GM13976 (cell line): ENCODE measurements at regions of chr12 and their contacts with region 1.

Region 1: DNA sequence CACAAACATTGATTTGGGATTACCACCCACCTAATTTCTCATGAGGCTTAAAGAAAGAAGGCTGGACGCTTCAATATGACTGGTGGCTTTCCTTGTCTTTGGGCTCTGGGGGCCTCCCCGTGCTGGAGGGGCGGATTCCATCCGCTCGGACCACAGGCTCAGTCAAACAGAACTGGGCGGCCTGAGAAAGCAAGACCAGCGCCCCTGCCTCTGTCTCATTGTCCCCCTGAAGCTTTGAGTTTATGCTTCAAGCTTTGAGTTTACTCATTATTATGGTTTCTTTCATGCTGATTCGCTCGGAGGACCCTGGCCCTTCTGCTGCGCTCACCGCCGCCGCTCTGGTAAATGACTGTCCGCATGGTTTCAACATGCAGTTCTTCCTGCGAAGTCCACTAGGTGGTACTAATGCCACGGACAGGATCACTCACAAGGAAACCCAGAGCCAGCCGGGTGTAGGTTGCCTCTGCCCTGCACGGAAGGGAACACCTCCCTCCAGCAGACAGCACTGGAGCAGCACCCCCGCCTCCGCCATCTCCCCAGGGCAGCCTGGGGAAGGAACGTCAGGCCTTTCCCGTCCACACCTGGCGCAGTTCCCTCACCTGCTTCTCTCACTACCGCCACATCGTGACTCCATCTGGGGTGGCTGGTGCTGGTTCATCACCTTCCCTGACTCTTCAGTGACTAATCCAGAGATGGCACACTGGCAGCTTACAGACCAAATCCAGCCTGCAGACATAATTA is 13.2 kb upstream of the TIGAR start:
- DNase-seq: peak; percentile 65
- CTCF ChIP-seq: no peak

Region 2: DNA sequence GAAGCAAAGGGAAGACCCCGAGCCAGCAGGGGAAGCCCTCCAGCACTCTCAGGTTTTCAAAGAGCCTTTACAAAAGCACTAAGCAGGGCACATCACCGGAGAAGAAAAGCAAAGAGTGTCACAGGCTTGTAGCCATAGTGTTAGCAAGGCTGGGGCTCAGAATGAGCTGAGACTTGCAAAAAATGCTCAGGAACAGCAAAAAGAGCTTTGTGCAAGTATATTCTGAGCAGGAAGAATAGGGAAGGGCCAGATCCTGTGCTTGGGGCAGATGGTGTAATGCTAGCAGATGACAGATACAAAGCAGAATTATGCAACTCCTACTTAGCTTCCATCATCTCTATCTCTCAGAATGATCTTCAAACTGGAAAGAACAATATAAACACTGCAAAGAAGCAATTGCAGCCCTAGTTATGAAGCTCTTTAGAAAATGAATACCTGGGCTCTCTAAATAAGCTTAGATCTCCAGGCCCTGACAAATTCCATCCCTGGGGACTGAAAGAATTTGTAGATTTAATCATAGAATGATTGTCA is 410.9 kb before region 1 on chr12:
- in situ Hi-C with region 1: loop called (anchors 10 kb)
- DNase-seq: no peak
- CTCF ChIP-seq: no peak

Region 3: GRCh38 chr12:5220835-5221234 is 913.1 kb after region 1 on chr12:
- in situ Hi-C with region 1: no loop called
- DNase-seq: no peak
- CTCF ChIP-seq: no peak